ENCODE measurements at regions of chr6 and their contacts with region 1.

Region 1: GRCh38 chr6:159353193-159353592 is 184.0 kb downstream of the FNDC1 start:
- DNase-seq: no peak
- H3K4me3 ChIP-seq: no peak overlapping the region
- H3K27ac ChIP-seq: no peak overlapping the region
- H3K4me1 ChIP-seq: no peaks in the 10 kb centered on the region
- H3K27me3 ChIP-seq: no peaks in the 10 kb centered on the region
- CTCF ChIP-seq: no peak
- POLR2A ChIP-seq: no peak

Region 2: GRCh38 chr6:159325476-159325875 is 27.7 kb before region 1 on chr6:
- intact Hi-C with region 1: loop called (anchors 1 kb)
- DNase-seq: no peak
- H3K4me3 ChIP-seq: no peak overlapping the region
- H3K27ac ChIP-seq: no peak overlapping the region
- H3K4me1 ChIP-seq: no peaks in the 10 kb centered on the region
- H3K27me3 ChIP-seq: no peaks in the 10 kb centered on the region
- CTCF ChIP-seq: no peak
- POLR2A ChIP-seq: no peak

Region 3: DNA sequence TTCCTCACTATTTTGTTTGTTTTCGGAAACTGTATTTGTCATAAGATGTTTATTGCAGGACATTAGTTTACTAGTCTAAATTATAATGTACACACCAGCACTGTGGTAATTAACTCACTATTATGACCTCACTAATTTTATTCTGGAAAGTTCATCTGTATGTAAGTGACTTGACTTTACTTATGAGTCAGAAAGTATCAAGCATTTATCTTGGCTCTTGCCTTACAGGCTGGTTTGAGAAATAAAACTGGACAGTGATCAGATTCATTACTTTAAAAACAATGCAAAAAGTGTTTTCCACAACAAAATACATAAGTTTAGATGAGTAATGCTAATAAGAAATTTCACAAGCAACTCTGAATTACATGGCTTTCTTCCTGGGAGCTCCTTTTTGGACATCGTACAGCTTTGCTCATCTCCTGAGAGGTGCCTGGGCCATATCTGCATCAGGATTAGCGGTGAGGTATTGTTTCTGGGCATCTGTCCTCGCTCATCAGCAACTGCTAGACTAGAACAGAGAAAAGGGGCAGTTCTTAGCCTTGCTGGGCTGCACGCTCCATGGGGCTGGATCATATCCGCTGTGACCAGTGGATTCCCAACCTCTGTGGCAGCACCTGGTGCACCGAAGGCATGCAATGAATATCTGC is 160.0 kb after region 1 on chr6:
- intact Hi-C with region 1: no loop called
- DNase-seq: no peak
- H3K4me3 ChIP-seq: no peak overlapping the region
- H3K27ac ChIP-seq: no peak overlapping the region
- H3K4me1 ChIP-seq: no peaks in the 10 kb centered on the region
- H3K27me3 ChIP-seq: no peaks in the 10 kb centered on the region
- CTCF ChIP-seq: no peak
- POLR2A ChIP-seq: no peak